Esophagus muscularis mucosa (tissue), 4 donors: ENCODE measurements at regions of chr15 and their contacts with region 1.

Region 1: GRCh38 chr15:91706322-91707032 is 147.0 kb upstream of the SLCO3A1 start:
- DNase-seq: no peak
- H3K4me3 ChIP-seq: peak overlapping the region in 1 of 4 donors; percentile 1
- H3K27ac ChIP-seq: peak overlapping the region in 3 of 4 donors; percentile 1 to 50 (median 13)
- H3K4me1 ChIP-seq: peaks cover 0 to 8% (median 7%) of the 10 kb centered on the region in 4 donors
- H3K27me3 ChIP-seq: no peaks in the 10 kb centered on the region
- CTCF ChIP-seq: peak; percentile 69 to 89 (median 89)
- EP300 ChIP-seq: no peak
- POLR2A ChIP-seq: no peak

Region 2: DNA sequence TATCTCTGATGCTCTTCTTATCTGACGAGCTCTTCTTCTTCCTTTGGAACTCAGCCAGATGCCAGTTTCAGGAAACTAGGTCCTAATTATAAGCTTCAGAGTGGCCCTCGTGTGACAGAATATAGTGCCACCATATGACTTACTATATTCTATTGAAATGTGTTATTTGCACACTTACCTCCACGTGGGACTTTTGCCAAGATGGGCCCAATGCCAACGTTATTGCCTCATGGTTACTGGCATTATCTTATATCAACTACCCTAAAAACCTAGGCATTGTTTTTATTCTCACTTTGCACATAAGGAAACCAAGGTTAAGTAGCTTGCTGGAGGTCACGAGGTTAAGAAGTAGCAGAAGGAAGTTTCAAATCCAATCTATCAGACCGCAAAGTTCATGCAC is 75.7 kb after region 1 on chr15:
- intact Hi-C with region 1: no loop called
- DNase-seq: no peak
- H3K4me3 ChIP-seq: no peak overlapping the region
- H3K27ac ChIP-seq: no peak overlapping the region
- H3K4me1 ChIP-seq: peaks cover 0 to 6% (median 0%) of the 10 kb centered on the region in 4 donors
- H3K27me3 ChIP-seq: peaks cover 0 to 18% (median 0%) of the 10 kb centered on the region in 4 donors
- CTCF ChIP-seq: no peak
- EP300 ChIP-seq: no peak
- POLR2A ChIP-seq: no peak

Region 3: GRCh38 chr15:92077353-92078085 is 371.0 kb after region 1 on chr15:
- intact Hi-C with region 1: loop called (anchors 5 kb)
- DNase-seq: no peak
- H3K4me3 ChIP-seq: no peak overlapping the region
- H3K27ac ChIP-seq: no peak overlapping the region
- H3K4me1 ChIP-seq: peaks cover 31 to 44% (median 40%) of the 10 kb centered on the region in 4 donors
- H3K27me3 ChIP-seq: no peaks in the 10 kb centered on the region
- CTCF ChIP-seq: peak; percentile 63 to 77 (median 63)
- EP300 ChIP-seq: no peak
- POLR2A ChIP-seq: no peak